WTC11 (cell line): ENCODE measurements at regions of chr3 and their contacts with region 1.

Region 1: DNA sequence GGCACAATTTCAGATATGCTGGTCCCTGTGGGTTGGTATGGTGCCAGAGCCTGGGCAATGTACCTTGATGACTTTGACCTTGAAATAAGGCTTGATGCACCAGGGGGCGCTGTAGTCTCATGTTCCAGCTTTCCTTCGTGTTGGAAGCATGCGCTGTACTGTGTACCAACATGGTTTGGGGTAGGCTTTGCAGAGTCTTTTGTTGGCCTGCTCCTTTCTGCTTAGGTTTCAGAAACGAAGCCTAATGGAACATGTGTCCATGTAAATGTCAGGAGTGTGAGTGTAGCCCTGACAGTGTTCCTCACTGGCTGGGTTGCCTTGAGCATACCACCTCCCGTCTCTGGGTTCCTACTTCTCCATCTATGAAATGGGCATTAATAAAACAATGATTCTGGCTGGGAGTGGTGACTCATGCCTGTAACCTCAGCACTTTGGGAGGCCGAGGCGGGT is 3.6 kb upstream of the CCR4 start:
- DNase-seq: peak; percentile 95
- ATAC-seq: peak; percentile 97
- H3K4me3 Mint-ChIP-seq: no peak overlapping the region
- H3K27ac Mint-ChIP-seq: no peak overlapping the region
- H3K4me1 Mint-ChIP-seq: no peaks in the 10 kb centered on the region
- H3K27me3 Mint-ChIP-seq: peaks cover 7% of the 10 kb centered on the region; the same call in 1 of the 2 replicates
- CTCF ChIP-seq: peak; percentile 89

Region 2: GRCh38 chr3:33006081-33006480 is 58.3 kb after region 1 on chr3:
- CTCF ChIA-PET with region 1: interaction called, 25 read pairs
- POLR2A ChIA-PET with region 1: no interaction called
- DNase-seq: peak; percentile 59
- ATAC-seq: peak; percentile 93
- H3K4me3 Mint-ChIP-seq: no peak overlapping the region
- H3K27ac Mint-ChIP-seq: 0 out of 2 replicates have a peak overlapping the region, but pooled peaks have one; percentile 39
- H3K4me1 Mint-ChIP-seq: peaks cover 21% of the 10 kb centered on the region
- H3K27me3 Mint-ChIP-seq: no peaks in the 10 kb centered on the region
- CTCF ChIP-seq: no peak